ENCODE measurements at regions of chr2 and their contacts with region 1.

Region 1: GRCh38 chr2:163419000-163419830 is 316.6 kb downstream of the FIGN start:
- DNase-seq: no peak
- ATAC-seq: no peak
- H3K4me3 ChIP-seq: no peak overlapping the region
- H3K4me3 Mint-ChIP-seq: peak overlapping the region; percentile 29
- H3K27ac ChIP-seq: peak overlapping the region in 1 of 2 donors; percentile 55
- H3K27ac Mint-ChIP-seq: peak overlapping the region; percentile 13
- H3K4me1 ChIP-seq: peaks cover 6 to 26% of the 10 kb centered on the region in 2 donors
- H3K4me1 Mint-ChIP-seq: peaks cover 35% of the 10 kb centered on the region
- H3K27me3 ChIP-seq: no peaks in the 10 kb centered on the region
- H3K27me3 Mint-ChIP-seq: no peaks in the 10 kb centered on the region
- CTCF ChIP-seq: no peak

Region 2: DNA sequence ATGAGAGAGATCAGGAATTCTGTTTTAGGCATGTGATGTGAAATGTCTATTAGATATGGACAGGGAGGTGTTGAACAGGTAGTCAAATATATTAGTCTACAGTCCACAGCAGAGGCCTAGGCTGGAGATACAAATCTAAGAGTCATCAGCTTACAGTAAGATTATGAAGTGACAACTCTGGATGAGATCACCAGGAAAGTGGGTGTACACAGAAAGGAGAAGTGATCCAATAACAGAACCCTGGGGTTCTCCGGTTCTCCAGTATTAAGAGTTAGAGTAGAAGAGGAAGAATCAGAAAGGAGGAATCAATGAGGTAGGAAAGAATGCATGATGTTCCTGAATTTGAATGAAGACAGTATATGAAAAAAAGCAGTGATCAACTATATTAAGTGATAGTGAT is 45.7 kb before region 1 on chr2:
- CTCF ChIA-PET with region 1: no interaction called
- POLR2A ChIA-PET with region 1: no interaction called
- intact Hi-C with region 1: no loop called
- DNase-seq: no peak
- ATAC-seq: no peak
- H3K4me3 ChIP-seq: no peak overlapping the region
- H3K4me3 Mint-ChIP-seq: no peak overlapping the region
- H3K27ac ChIP-seq: no peak overlapping the region
- H3K27ac Mint-ChIP-seq: no peak overlapping the region
- H3K4me1 ChIP-seq: no peaks in the 10 kb centered on the region
- H3K4me1 Mint-ChIP-seq: no peaks in the 10 kb centered on the region
- H3K27me3 ChIP-seq: no peaks in the 10 kb centered on the region
- H3K27me3 Mint-ChIP-seq: no peaks in the 10 kb centered on the region
- CTCF ChIP-seq: no peak

Region 3: GRCh38 chr2:163436963-163437362 is 17.7 kb after region 1 on chr2:
- CTCF ChIA-PET with region 1: no interaction called
- POLR2A ChIA-PET with region 1: no interaction called
- intact Hi-C with region 1: loop called (anchors 1 kb)
- DNase-seq: no peak
- ATAC-seq: no peak
- H3K4me3 ChIP-seq: no peak overlapping the region
- H3K4me3 Mint-ChIP-seq: no peak overlapping the region
- H3K27ac ChIP-seq: no peak overlapping the region
- H3K27ac Mint-ChIP-seq: no peak overlapping the region
- H3K4me1 ChIP-seq: peaks cover 4 to 11% of the 10 kb centered on the region in 2 donors
- H3K4me1 Mint-ChIP-seq: peaks cover 10% of the 10 kb centered on the region
- H3K27me3 ChIP-seq: no peaks in the 10 kb centered on the region
- H3K27me3 Mint-ChIP-seq: peaks cover 4% of the 10 kb centered on the region
- CTCF ChIP-seq: no peak

Region 4: GRCh38 chr2:163621445-163622004 is 202.3 kb after region 1 on chr2:
- CTCF ChIA-PET with region 1: no interaction called
- POLR2A ChIA-PET with region 1: no interaction called
- intact Hi-C with region 1: no loop called
- DNase-seq: no peak
- ATAC-seq: no peak
- H3K4me3 ChIP-seq: no peak overlapping the region
- H3K4me3 Mint-ChIP-seq: no peak overlapping the region
- H3K27ac ChIP-seq: no peak overlapping the region
- H3K27ac Mint-ChIP-seq: no peak overlapping the region
- H3K4me1 ChIP-seq: no peaks in the 10 kb centered on the region
- H3K4me1 Mint-ChIP-seq: no peaks in the 10 kb centered on the region
- H3K27me3 ChIP-seq: no peaks in the 10 kb centered on the region
- H3K27me3 Mint-ChIP-seq: no peaks in the 10 kb centered on the region
- CTCF ChIP-seq: no peak